Motor neuron (in vitro differentiated cells): ENCODE measurements at regions of chr11 and their contacts with region 1.

Region 1: DNA sequence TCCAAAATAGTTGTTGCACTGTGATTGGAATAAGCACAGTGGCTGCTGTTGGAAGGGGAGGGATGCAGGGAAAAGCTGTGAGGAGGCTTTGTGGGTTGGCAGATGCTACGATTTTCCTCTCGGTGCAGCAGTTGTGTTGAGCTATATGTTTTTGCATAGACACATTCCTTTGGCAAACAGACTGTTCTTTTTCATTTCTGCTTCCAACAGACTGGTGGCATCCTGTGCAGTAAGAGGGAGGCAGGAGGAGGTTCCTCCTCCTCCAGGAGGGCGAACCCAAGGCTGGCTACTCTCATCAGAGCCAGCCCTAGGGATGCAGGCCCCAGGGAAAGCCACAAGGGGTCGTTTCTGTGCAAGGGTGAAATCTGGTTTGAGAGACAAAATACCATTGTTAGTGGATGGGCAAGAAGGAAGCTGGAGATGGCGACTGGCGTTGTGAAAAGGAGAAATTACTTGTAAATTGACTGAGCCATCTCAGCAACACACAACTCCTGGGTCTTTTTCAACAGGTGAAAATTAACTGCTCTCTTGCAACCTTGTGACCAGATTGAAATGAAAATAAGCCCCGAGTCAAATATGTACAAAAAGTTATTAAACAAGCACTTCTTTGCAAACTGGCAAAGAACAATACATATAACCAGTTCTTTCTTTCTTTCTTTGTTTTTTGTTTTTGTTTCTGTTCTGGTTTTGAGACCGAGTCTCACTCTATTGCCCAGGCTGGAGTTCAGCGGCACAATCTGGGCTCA is 26.5 kb upstream of the UBASH3B start:
- ATAC-seq: peak; percentile 48 to 97 (median 73)
- H3K4me3 ChIP-seq: no peak overlapping the region
- H3K27ac ChIP-seq: no peak overlapping the region
- H3K4me1 ChIP-seq: no peaks in the 10 kb centered on the region

Region 2: GRCh38 chr11:122754553-122755322 is 125.8 kb after region 1 on chr11:
- in situ Hi-C with region 1: loop called in 1 of 9 experiments (anchors 25 kb)
- ATAC-seq: peak in 2 of 8 experiments; percentile 55 to 88
- H3K4me3 ChIP-seq: no peak overlapping the region
- H3K27ac ChIP-seq: no peak overlapping the region
- H3K4me1 ChIP-seq: no peaks in the 10 kb centered on the region

Region 3: GRCh38 chr11:122781378-122782195 is 152.6 kb after region 1 on chr11:
- in situ Hi-C with region 1: loop called in 4 of 9 experiments (anchors 10 to 25 kb)
- ATAC-seq: peak; percentile 88 to 100 (median 96)
- H3K4me3 ChIP-seq: no peak overlapping the region
- H3K27ac ChIP-seq: no peak overlapping the region
- H3K4me1 ChIP-seq: peaks cover 3 to 7% of the 10 kb centered on the region in 2 donors

Region 4: DNA sequence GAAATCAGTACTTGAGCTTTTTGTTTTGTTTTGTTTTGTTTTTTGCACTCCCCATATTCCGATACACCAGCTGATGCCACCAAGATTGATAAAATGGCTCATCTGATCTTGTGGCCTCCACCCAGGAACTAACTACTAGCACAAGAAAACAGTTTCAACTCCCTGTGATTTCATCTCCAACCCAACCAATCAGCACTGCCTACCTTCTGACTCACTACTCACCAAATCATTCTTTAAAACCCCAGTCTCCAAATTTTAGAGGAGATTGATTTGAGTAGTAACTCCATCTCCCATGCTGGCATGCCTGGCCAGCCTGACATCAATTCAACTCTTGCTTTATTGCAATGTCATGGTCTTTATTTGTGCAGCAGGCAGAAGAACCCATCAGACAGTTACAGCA is 193.3 kb after region 1 on chr11:
- in situ Hi-C with region 1: no loop called
- ATAC-seq: no peak
- H3K4me3 ChIP-seq: no peak overlapping the region
- H3K27ac ChIP-seq: no peak overlapping the region
- H3K4me1 ChIP-seq: no peaks in the 10 kb centered on the region

Region 5: GRCh38 chr11:122843281-122844141 is 214.5 kb after region 1 on chr11:
- in situ Hi-C with region 1: no loop called
- ATAC-seq: peak in 5 of 8 experiments; percentile 27 to 56 (median 47)
- H3K4me3 ChIP-seq: no peak overlapping the region
- H3K27ac ChIP-seq: no peak overlapping the region
- H3K4me1 ChIP-seq: no peaks in the 10 kb centered on the region

Region 6: GRCh38 chr11:122853971-122854446 is 225.0 kb after region 1 on chr11:
- in situ Hi-C with region 1: loop called in 1 of 9 experiments (anchors 10 kb)
- ATAC-seq: peak; percentile 8 to 72 (median 48)
- H3K4me3 ChIP-seq: no peak overlapping the region
- H3K27ac ChIP-seq: no peak overlapping the region
- H3K4me1 ChIP-seq: peaks cover 10 to 21% of the 10 kb centered on the region in 2 donors